Endothelial cell of umbilical vein (primary cell): ENCODE measurements at regions of chr7 and their contacts with region 1.

Region 1: DNA sequence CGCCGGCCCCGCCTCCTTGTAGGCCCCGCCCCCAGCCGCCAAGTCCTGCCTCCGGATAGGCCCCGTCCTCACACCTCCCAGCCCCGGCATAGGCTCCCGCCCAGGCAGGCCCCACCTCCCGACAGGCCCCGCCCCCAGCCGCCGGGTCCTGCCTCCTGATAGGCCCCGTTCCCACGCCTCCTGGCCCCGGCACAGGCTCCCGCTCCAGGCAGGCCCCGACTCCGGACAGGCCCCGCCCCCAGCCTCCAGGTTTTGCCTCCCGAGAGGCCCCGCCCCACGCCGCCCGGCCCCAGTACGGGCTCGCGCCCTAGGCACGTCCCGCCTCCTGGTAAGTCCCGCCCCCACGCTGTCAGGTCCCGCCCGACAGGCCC is 237 bp upstream of the MICALL2 start:
- DNase-seq: peak; percentile 99
- H3K4me3 ChIP-seq: peak overlapping the region in 1 of 3 experiments; percentile 81
- H3K27ac ChIP-seq: no peak overlapping the region
- H3K4me1 ChIP-seq: peaks cover 41% of the 10 kb centered on the region
- H3K27me3 ChIP-seq: no peaks in the 10 kb centered on the region
- CTCF ChIP-seq: no peak
- POLR2A ChIP-seq: no peak

Region 2: DNA sequence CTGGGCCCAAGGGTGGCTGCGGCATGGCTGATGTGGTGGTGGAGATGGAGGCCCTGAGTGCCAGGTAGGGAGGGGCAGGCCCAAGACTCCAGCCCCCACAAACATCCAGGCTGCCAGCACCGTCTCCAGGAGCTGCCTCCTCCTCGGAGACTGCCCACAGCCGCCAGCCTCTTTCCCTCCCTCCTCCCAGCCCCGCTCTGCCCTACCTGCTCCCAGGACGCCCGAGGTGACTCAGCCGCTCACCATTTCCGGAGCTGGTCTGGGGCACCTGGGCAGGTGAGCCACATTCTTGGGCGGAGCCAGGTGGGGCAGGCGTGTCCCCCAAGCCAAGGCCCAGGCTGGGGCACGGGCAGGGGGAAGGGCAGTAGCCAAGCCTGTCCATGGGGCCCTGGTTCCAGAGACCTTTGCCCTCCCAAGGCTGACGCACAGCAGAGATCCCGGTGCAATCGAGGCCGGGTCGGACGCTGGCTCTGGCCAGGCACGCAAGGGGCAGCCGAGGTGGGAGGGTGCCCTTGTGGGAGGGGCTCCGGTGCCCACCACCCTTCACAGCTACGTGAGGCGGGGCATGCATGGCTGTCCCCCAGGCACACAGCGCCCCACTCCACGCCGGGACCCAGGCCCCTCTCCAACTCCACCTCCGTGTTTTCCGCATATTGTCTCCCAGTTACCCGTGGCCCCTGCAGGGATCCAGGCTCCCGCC is 513.8 kb before region 1 on chr7:
- CTCF ChIA-PET with region 1: no interaction called
- POLR2A ChIA-PET with region 1: no interaction called
- dilution Hi-C with region 1: no loop called
- intact Hi-C with region 1: no loop called
- DNase-seq: no peak
- H3K4me3 ChIP-seq: no peak overlapping the region
- H3K27ac ChIP-seq: no peak overlapping the region
- H3K4me1 ChIP-seq: no peaks in the 10 kb centered on the region
- H3K27me3 ChIP-seq: peaks cover 0 to 8% of the 10 kb centered on the region in 2 experiments
- CTCF ChIP-seq: no peak
- POLR2A ChIP-seq: no peak

Region 3: DNA sequence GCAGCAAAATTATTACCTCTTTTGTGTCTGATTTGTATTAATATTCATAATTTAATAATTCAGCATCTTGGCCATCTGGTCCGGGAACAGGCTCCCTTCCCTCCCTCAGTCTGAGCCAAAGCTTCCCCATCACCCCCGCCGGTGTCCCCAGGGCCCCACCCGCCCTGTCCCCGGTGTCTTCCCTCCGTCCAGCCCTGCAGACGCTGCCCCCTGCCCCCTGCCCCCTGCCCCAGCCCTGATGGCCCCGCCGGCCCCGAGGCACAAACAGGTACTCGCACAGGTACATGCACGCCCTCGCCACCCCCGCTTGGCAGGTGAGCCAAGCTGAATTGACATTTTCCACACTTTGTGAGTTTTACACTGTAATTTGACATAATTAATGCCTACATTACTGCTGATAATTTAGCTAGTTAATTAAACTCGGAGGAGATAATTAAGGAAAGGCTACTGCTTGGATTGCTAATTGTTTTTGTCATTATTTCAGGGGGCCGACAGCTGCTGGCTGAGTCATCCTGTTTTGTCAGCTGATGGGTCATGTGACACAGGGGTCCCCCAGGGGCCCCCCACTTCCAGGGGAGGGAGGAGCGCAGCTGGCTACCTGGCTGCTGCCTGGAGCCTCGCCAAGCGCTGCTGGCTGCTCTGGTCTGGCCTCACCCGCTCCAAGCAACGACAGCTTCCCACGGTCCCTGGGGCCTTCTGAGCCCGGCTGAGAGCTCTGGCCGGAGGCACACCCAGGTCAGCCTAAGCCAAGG is 36.8 kb before region 1 on chr7:
- CTCF ChIA-PET with region 1: no interaction called
- POLR2A ChIA-PET with region 1: no interaction called
- dilution Hi-C with region 1: no loop called
- intact Hi-C with region 1: loop called (anchors 2 kb)
- DNase-seq: no peak
- H3K4me3 ChIP-seq: no peak overlapping the region
- H3K27ac ChIP-seq: no peak overlapping the region
- H3K4me1 ChIP-seq: no peaks in the 10 kb centered on the region
- H3K27me3 ChIP-seq: peaks cover 6% of the 10 kb centered on the region in 2 experiments
- CTCF ChIP-seq: no peak
- POLR2A ChIP-seq: no peak

Region 4: DNA sequence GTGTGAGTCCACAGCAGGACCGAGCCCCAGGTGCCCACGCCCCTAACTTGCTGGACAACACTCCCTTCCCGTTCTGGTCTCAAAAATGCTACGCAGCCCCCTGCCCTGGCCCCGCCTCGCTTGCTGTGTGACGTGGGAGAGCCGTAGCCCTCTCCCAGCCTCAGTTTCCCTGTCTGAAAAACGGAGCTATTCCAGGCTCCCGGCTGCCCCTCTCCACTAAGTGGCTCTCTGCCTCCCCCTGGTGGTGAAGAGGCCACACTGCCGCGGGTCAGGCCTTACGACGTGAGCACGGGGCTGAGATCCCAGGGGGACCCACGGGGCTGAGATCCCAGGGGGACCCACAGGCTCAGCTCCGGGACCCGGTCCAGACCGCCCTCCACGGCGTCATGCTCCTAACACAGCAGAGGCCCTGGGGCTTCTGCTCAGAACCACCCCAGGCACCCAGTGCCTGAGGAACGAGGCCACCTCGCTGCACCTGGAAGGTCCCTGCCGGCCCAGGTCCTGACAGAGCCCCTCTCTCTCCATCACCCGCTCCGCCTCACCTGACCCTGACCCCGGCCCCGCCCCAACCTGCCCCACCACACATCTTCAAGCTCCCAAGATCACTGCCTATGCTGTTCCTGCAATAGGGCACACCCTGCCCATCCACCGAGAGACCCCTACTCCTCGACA is 27.0 kb before region 1 on chr7:
- CTCF ChIA-PET with region 1: interaction called, 23 read pairs
- POLR2A ChIA-PET with region 1: no interaction called
- dilution Hi-C with region 1: no loop called
- intact Hi-C with region 1: no loop called
- DNase-seq: peak; percentile 51
- H3K4me3 ChIP-seq: no peak overlapping the region
- H3K27ac ChIP-seq: no peak overlapping the region
- H3K4me1 ChIP-seq: no peaks in the 10 kb centered on the region
- H3K27me3 ChIP-seq: no peaks in the 10 kb centered on the region
- CTCF ChIP-seq: peak; percentile 95 to 97
- POLR2A ChIP-seq: no peak

Region 5: GRCh38 chr7:1439373-1440363 is 19.8 kb before region 1 on chr7:
- CTCF ChIA-PET with region 1: interaction called, 3 read pairs
- POLR2A ChIA-PET with region 1: no interaction called
- dilution Hi-C with region 1: no loop called
- intact Hi-C with region 1: loop called (anchors 1 kb)
- DNase-seq: no peak
- H3K4me3 ChIP-seq: no peak overlapping the region
- H3K27ac ChIP-seq: no peak overlapping the region
- H3K4me1 ChIP-seq: no peaks in the 10 kb centered on the region
- H3K27me3 ChIP-seq: no peaks in the 10 kb centered on the region
- CTCF ChIP-seq: no peak
- POLR2A ChIP-seq: no peak

Region 6: DNA sequence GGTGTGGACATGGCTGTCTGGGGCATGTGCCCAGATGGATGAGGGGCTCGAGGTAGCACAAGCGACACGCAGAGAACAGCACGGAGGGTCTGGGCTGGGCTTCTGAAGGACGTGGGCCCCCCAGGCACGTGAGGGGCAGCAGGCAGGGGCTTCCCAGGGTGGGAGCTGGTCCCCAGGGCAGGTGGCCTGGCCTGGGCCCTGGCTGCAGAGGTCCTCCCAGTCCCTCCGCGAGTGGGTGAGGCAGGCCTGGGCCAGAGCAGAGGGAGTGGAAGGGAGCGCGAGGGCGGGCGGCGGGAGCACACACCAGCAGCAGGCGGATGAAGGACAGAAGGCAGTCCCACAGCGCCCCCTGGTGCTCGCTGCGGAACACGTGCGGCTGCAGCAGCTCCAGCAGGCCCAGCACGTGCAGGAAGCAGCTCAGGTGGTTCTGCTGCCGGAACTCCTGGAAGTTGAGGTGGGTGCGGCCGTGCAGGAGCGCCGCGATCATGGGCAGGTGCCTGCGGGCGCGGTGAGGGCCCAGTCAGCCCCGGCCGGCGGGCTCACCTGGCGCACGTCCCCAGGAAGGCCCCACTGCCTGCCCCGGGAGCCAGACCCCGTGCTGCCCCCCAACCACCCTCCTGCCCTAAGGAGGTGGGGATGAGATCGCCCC is 14.5 kb after region 1 on chr7:
- CTCF ChIA-PET with region 1: interaction called, 65 read pairs
- POLR2A ChIA-PET with region 1: no interaction called
- dilution Hi-C with region 1: no loop called
- intact Hi-C with region 1: no loop called
- DNase-seq: peak; percentile 64
- H3K4me3 ChIP-seq: no peak overlapping the region
- H3K27ac ChIP-seq: no peak overlapping the region
- H3K4me1 ChIP-seq: no peaks in the 10 kb centered on the region
- H3K27me3 ChIP-seq: no peaks in the 10 kb centered on the region
- CTCF ChIP-seq: peak; percentile 91 to 97
- POLR2A ChIP-seq: no peak

Region 7: DNA sequence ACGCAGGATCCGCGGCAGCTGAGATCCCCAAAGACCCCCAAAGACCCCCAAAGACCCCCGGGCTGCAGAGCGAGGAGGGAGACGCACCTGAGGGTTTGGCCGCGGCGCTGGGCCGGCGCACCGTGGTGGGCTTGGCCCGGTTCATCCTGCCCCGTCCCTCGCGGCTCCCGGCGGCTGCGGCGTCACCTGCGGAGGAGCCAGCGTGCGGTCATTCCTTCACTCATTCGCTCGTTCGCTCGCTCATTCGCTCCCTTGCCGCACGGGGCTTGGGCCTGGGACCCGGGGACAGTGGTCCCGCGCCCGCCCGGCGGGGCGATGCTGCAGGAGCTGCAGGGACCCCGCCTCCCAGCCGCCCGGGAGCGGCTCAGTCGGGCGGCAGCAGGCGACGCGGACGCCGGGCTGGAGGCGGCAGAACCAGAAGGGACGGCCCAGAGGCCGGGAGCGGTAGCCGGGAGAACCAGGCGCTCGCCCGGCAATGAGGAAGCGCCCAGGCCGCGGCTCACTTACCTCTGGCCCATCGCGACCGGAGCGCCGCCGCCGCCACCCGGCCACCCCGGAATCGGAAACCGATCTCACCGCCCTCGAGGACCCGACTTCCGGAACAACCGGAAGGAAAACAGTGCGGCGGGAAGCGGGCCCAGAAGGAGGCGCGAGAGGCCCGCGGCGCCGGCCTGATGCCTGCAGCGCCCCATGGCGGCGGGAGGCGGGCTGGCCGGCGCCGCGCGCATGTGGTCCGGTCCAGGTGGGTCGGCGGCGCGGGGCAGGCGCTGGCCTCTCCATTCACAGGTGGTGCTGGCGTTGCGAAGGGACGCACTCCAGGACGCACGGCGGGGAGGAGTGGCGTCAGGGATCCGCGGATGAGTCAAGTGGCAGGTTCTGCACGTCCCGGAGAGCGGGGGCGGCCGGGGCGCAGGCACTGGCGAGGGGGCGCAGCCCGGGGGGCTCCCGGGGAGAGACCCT is 44.6 kb after region 1 on chr7 and contains the start of gene INTS1:
- CTCF ChIA-PET with region 1: no interaction called
- POLR2A ChIA-PET with region 1: no interaction called
- dilution Hi-C with region 1: no loop called
- intact Hi-C with region 1: loop called (anchors 1 kb)
- DNase-seq: peak; percentile 85
- H3K4me3 ChIP-seq: peak within 1 kb of the TSS; percentile 51 to 98 (median 56)
- H3K27ac ChIP-seq: peak within 1 kb of the TSS; percentile 49
- H3K4me1 ChIP-seq: peaks cover 5% of the 10 kb centered on the region
- H3K27me3 ChIP-seq: no peaks in the 10 kb centered on the region
- CTCF ChIP-seq: peak; percentile 83 to 97
- POLR2A ChIP-seq: peak; percentile 81
- total RNA-seq, gene INTS1: 114 and 116 TPM in 2 replicates

Region 8: DNA sequence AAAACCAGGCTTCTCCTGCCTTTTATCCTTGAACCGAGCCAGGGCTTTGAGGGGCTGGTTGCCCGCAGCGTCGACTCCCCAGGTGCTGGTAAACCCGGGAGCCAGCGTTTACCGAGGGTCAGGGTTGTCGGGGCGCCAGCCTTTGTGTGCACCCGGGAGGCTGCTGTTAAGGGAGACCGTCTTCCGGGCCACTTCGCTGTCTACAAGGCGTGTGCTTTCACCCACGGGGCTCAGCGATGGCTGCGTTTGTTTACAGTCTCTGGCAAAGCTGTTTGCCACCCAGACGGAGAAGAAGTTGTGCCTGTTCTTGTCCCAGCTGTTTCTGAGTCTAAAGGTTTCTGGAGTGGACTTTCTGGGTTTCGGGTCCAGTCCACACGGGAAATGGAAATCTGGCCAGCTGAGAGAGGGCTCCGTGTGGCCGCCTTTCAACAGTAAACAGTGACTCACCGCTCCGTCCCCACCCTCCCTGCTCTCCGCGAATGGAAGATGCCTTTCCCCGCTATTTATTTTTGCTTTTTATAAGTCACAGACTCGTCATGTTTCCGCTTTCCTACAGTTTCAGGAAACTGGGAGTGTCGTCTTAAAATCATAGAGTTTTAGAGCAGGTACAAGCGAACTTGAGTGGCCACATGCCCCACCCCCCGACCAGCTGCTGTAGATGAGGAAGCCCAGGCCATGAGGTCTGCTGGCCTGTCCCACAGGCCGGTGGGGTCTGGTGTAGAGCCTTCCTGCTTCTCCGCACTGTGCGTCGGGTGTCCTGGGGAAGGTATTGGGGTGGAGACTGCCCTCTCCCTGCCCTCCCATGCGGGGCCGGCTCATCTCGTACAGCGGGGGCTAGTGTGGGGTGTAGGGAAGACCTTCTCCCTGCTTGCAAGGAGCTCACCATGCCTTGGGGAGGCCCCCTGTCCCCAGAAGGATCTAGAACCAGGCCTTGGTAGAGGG is 73.2 kb after region 1 on chr7:
- CTCF ChIA-PET with region 1: no interaction called
- POLR2A ChIA-PET with region 1: no interaction called
- dilution Hi-C with region 1: no loop called
- intact Hi-C with region 1: loop called (anchors 2 kb)
- DNase-seq: peak; percentile 97
- H3K4me3 ChIP-seq: peak overlapping the region; percentile 5 to 70 (median 54)
- H3K27ac ChIP-seq: peak overlapping the region; percentile 97
- H3K4me1 ChIP-seq: peaks cover 49% of the 10 kb centered on the region
- H3K27me3 ChIP-seq: peaks cover 0 to under 1% of the 10 kb centered on the region in 2 experiments
- CTCF ChIP-seq: no peak
- POLR2A ChIP-seq: peak; percentile 50